ENCODE measurements at regions of chr13 and their contacts with region 1.

Region 1: DNA sequence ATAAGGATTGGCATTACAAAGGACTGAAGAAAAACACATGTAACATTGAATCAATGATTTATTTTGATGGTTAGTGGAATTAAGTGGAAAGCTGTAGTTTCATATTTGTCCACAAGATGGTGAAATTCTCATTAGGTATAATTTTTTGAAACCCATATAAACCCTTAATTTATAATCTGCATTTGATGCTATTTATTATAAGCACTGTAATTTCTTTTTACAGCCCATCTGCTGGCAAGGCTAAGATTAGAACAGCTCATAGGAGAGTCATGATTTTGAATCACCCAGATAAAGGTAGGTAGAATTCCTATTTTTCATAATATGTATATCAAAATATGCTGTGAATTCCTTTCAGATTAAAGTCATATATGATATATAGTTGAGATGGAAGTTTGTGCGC is 62.2 kb downstream of the DNAJC15 start:
- DNase-seq: peak in 3 of 14 experiments; percentile 35 to 41 (median 41)
- ATAC-seq: no peak
- H3K4me3 ChIP-seq: no peak overlapping the region
- H3K4me3 Mint-ChIP-seq: no peak overlapping the region
- H3K27ac ChIP-seq: no peak overlapping the region
- H3K27ac Mint-ChIP-seq: no peak overlapping the region
- H3K4me1 ChIP-seq: no peaks in the 10 kb centered on the region
- H3K4me1 Mint-ChIP-seq: peaks cover 19% of the 10 kb centered on the region
- H3K27me3 ChIP-seq: no peaks in the 10 kb centered on the region
- H3K27me3 Mint-ChIP-seq: no peaks in the 10 kb centered on the region
- CTCF ChIP-seq: peak; percentile 71

Region 2: GRCh38 chr13:43074824-43075510 is 10.6 kb before region 1 on chr13:
- CTCF ChIA-PET with region 1: interaction called, 11 read pairs
- POLR2A ChIA-PET with region 1: interaction called, 4 read pairs
- intact Hi-C with region 1: no loop called
- DNase-seq: peak in 2 of 14 experiments; percentile 13 to 40
- ATAC-seq: peak; percentile 44
- H3K4me3 ChIP-seq: peak overlapping the region; percentile 5
- H3K4me3 Mint-ChIP-seq: peak overlapping the region; percentile 17
- H3K27ac ChIP-seq: no peak overlapping the region
- H3K27ac Mint-ChIP-seq: peak overlapping the region; percentile 1
- H3K4me1 ChIP-seq: peaks cover 4% of the 10 kb centered on the region
- H3K4me1 Mint-ChIP-seq: peaks cover 60% of the 10 kb centered on the region
- H3K27me3 ChIP-seq: no peaks in the 10 kb centered on the region
- H3K27me3 Mint-ChIP-seq: no peaks in the 10 kb centered on the region
- CTCF ChIP-seq: no peak

Region 3: DNA sequence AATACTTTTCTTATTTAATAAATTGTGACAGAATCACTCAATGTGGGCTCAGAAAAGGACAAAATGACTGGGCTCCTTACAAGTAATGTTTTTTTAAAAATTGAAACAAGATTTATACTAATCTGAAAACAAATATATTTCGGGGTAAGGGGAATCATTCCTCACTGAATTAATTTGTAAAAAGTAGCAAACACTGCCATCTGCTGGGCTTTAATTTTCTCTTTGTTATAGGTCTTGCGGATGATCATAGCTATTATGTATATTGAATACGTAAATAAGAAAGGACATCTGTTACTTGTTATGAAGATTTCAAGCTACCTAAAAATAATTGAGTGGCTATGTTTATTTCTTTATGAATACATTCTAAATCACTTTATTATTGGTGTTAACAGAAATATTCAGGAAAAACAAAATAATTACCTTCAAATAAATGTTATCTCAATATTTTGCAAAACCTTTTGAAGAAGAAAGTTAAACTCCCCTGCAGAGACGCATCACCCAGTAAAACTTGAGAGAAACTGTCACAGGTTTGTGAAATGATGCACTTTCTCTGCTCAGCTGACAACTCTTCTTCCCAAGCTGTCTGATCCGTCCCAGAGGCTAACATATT is 719.0 kb after region 1 on chr13:
- CTCF ChIA-PET with region 1: no interaction called
- POLR2A ChIA-PET with region 1: no interaction called
- intact Hi-C with region 1: loop called (anchors 1 to 2 kb)
- DNase-seq: peak in 4 of 14 experiments; percentile 10 to 64 (median 60)
- ATAC-seq: no peak
- H3K4me3 ChIP-seq: no peak overlapping the region
- H3K4me3 Mint-ChIP-seq: no peak overlapping the region
- H3K27ac ChIP-seq: no peak overlapping the region
- H3K27ac Mint-ChIP-seq: no peak overlapping the region
- H3K4me1 ChIP-seq: no peaks in the 10 kb centered on the region
- H3K4me1 Mint-ChIP-seq: no peaks in the 10 kb centered on the region
- H3K27me3 ChIP-seq: peaks cover 0 to 4% of the 10 kb centered on the region in 2 experiments
- H3K27me3 Mint-ChIP-seq: peaks cover 22% of the 10 kb centered on the region
- CTCF ChIP-seq: peak; percentile 69

Region 4: GRCh38 chr13:43878892-43879754 is 793.6 kb after region 1 on chr13 and contains the start of gene CCDC122:
- CTCF ChIA-PET with region 1: no interaction called
- POLR2A ChIA-PET with region 1: no interaction called
- intact Hi-C with region 1: loop called in 1 of 2 experiments (anchors 5 kb)
- DNase-seq: peak; percentile 31 to 91 (median 59)
- ATAC-seq: peak; percentile 90
- H3K4me3 ChIP-seq: peak within 1 kb of the TSS; percentile 76
- H3K4me3 Mint-ChIP-seq: peak within 1 kb of the TSS; percentile 91
- H3K27ac ChIP-seq: peak within 1 kb of the TSS; percentile 46 to 58
- H3K27ac Mint-ChIP-seq: peak within 1 kb of the TSS; percentile 79
- H3K4me1 ChIP-seq: peaks cover 16% of the 10 kb centered on the region
- H3K4me1 Mint-ChIP-seq: peaks cover 16% of the 10 kb centered on the region
- H3K27me3 ChIP-seq: no peaks in the 10 kb centered on the region
- H3K27me3 Mint-ChIP-seq: peaks cover 11% of the 10 kb centered on the region
- CTCF ChIP-seq: no peak
- total RNA-seq, gene CCDC122: 0.52 to 0.64 TPM

Measured in CD4-positive, alpha-beta T cell (primary cell).